ENCODE measurements at regions of chr11 and their contacts with region 1.

Region 1: DNA sequence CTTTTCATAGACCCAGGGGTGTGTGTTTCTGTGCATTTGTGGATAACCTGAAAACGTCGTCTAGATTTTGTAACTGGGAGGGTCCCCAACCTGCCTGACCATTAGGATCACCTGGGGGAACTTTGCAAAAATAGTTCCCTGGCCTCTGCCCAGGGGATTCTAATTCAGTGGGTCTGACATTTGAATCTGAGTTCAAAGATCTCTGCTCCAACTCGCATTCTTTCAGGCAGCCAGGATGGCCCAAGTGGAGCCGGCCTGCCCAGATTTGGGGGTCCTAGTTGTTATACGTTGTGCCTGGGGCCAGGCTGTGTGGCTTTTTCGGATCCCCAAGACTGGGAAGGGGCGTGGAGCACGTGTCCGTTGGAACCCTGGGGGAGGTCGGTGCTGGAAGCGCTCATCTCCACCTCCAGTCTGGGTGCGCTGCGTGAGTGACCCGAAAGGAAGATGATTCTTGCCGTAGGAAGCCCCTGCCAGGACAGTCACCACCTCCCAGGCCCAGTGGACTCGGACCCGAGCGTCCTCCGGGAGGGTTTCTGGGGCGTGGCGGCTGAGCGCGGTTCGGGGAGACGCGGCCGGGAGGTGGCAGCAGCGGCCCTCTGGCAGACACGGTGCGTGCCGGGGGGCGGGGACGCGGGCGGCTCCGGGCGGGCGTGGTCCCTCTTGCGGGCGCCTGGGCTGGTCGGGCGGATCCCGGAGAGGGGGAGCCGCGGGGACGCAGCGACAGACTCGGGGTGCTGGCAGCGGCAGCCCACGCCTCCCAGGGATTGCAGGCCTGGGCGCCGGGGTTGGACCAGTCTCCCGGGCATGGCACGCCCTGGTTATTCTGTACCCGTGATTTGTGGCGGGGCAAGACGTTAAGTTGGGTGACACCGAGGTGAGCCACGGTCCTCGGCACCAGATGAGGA is 29.2 kb upstream of the PLET1 start:
- DNase-seq: peak; percentile 55
- H3K4me3 ChIP-seq: peak overlapping the region; percentile 48 to 54 (median 51)
- H3K27ac ChIP-seq: no peak overlapping the region
- H3K4me1 ChIP-seq: peaks cover 18% of the 10 kb centered on the region
- H3K27me3 ChIP-seq: no peaks in the 10 kb centered on the region
- CTCF ChIP-seq: peak; percentile 56 to 75

Region 2: DNA sequence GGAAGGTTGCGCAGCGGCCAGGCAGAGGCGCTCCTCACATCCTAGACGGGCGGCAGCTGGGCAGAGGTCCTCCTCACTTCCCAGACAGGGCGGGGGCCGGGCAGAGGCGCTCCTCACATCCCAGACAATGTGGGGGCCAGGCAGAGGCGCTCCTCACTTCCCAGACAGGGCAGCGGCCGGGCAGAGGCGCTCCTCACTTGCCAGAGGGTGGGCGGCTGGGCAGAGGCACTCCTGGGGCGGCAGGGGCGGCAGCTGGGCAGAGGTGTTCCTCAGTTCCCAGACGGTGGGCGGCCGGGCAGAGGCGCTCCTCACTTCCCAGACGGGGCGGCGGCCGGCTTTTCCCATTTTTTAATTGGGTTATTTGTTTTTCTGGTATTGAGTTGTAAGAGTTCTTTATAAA is 83.8 kb before region 1 on chr11:
- CTCF ChIA-PET with region 1: no interaction called
- dilution Hi-C with region 1: no loop called
- in situ Hi-C with region 1: no loop called
- intact Hi-C with region 1: no loop called
- DNase-seq: no peak
- H3K4me3 ChIP-seq: no peak overlapping the region
- H3K27ac ChIP-seq: no peak overlapping the region
- H3K4me1 ChIP-seq: no peaks in the 10 kb centered on the region
- H3K27me3 ChIP-seq: no peaks in the 10 kb centered on the region
- CTCF ChIP-seq: no peak

Region 3: GRCh38 chr11:112219476-112220232 is 70.2 kb before region 1 on chr11:
- CTCF ChIA-PET with region 1: no interaction called
- dilution Hi-C with region 1: loop called (anchors 5 kb)
- in situ Hi-C with region 1: no loop called
- intact Hi-C with region 1: no loop called
- DNase-seq: peak; percentile 53
- H3K4me3 ChIP-seq: no peak overlapping the region
- H3K27ac ChIP-seq: no peak overlapping the region
- H3K4me1 ChIP-seq: peaks cover 6% of the 10 kb centered on the region
- H3K27me3 ChIP-seq: no peaks in the 10 kb centered on the region
- CTCF ChIP-seq: peak; percentile 63 to 64

Region 4: DNA sequence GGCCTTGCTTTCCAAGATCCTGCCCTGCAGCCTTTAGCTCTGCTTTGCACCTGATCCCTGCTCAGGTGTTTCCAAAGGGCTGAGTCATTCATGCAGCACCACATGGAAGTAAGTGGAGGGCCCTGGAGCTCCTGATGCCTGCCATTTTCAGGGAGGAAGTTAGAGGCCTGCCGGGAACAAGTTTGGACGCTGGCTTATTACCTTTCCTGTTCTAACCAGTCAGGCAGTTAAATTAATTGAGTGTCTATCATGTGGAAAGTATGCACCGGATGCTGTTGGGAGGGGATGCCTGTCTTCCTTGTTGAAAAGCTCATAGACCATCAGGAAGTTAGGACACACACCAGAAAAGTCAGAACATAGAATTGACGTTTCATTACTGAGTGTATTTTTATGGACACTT is 44.5 kb after region 1 on chr11:
- CTCF ChIA-PET with region 1: no interaction called
- dilution Hi-C with region 1: no loop called
- in situ Hi-C with region 1: no loop called
- intact Hi-C with region 1: loop called (anchors 5 kb)
- DNase-seq: peak; percentile 68
- H3K4me3 ChIP-seq: no peak overlapping the region
- H3K27ac ChIP-seq: no peak overlapping the region
- H3K4me1 ChIP-seq: peaks cover 6% of the 10 kb centered on the region
- H3K27me3 ChIP-seq: peaks cover 7% of the 10 kb centered on the region
- CTCF ChIP-seq: no peak

Region 5: GRCh38 chr11:112453601-112454577 is 164.0 kb after region 1 on chr11:
- CTCF ChIA-PET with region 1: no interaction called
- dilution Hi-C with region 1: no loop called
- in situ Hi-C with region 1: loop called in 1 of 2 experiments (anchors 10 kb)
- intact Hi-C with region 1: loop called (anchors 1 kb)
- DNase-seq: peak; percentile 20
- H3K4me3 ChIP-seq: no peak overlapping the region
- H3K27ac ChIP-seq: no peak overlapping the region
- H3K4me1 ChIP-seq: no peaks in the 10 kb centered on the region
- H3K27me3 ChIP-seq: no peaks in the 10 kb centered on the region
- CTCF ChIP-seq: peak; percentile 58 to 65

Region 6: GRCh38 chr11:112588252-112588694 is 298.4 kb after region 1 on chr11:
- CTCF ChIA-PET with region 1: no interaction called
- dilution Hi-C with region 1: no loop called
- in situ Hi-C with region 1: no loop called
- intact Hi-C with region 1: loop called (anchors 1 kb)
- DNase-seq: peak; percentile 74
- H3K4me3 ChIP-seq: no peak overlapping the region
- H3K27ac ChIP-seq: no peak overlapping the region
- H3K4me1 ChIP-seq: no peaks in the 10 kb centered on the region
- H3K27me3 ChIP-seq: no peaks in the 10 kb centered on the region
- CTCF ChIP-seq: peak; percentile 52 to 73

Region 7: DNA sequence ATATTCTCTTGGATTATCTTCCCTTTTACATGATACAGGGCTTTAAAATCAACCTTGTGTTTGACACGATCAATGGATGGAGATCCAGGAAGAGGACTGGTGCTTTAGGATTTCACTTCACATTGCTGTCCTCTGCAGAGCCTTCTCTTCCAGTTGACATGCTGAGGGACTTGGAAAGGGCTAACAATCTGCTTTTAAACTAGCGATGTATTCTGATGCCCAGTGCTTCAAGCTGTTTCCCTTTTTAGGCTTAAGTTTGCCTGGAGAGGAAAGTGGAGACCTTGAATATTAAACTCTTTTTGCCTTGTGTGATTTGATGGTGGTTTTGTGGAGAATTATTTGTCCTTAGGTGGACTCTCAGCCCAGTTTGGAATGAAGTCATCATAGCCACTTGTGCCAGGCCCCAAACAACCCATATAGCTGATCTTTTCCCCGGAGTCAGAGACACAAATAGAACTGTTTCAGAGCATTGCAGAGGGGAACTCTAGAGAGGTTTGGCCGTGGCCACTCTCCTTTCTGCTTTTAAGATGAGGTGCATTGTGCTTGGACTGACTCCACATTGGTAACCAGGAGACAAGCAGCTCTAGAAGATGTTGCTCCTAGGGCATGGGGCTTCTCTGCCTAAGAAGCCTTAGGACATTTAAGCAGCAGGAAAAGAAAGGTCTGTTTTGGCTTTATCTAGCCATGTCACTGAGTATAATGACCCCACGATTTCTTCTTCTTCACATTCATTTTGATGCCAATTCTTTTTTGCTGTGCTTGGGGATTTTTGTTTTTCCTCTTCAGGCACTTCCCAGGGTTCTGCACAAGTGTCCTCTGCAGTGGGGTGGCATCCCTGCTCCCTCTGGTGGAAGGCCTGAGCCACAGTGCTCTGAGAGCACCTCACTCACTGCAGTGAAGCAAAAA is 824.2 kb after region 1 on chr11:
- CTCF ChIA-PET with region 1: no interaction called
- dilution Hi-C with region 1: no loop called
- in situ Hi-C with region 1: no loop called
- intact Hi-C with region 1: loop called (anchors 5 kb)
- DNase-seq: peak; percentile 49
- H3K4me3 ChIP-seq: no peak overlapping the region
- H3K27ac ChIP-seq: no peak overlapping the region
- H3K4me1 ChIP-seq: no peaks in the 10 kb centered on the region
- H3K27me3 ChIP-seq: peaks cover 7% of the 10 kb centered on the region
- CTCF ChIP-seq: peak; percentile 76 to 93